Activated CD8-positive, alpha-beta T cell treated with anti-CD3 and anti-CD28 coated beads, Interleukin-2, amount 10 ng/mL, durations not matched to agents 7 days and 5 days (primary cell): ENCODE measurements at regions of chr2 and their contacts with region 1.

Region 1: GRCh38 chr2:181140414-181140813 is 160.0 kb downstream of the UBE2E3 start:
- DNase-seq: no peak
- ATAC-seq: no peak
- H3K4me3 Mint-ChIP-seq: peak overlapping the region; percentile 65
- H3K27ac Mint-ChIP-seq: peak overlapping the region; percentile 92
- H3K4me1 Mint-ChIP-seq: peaks cover 72% of the 10 kb centered on the region
- H3K27me3 Mint-ChIP-seq: no peaks in the 10 kb centered on the region

Region 2: GRCh38 chr2:181123798-181124231 is 16.6 kb before region 1 on chr2:
- CTCF ChIA-PET with region 1: interaction called, 28 read pairs
- POLR2A ChIA-PET with region 1: interaction called, 40 read pairs
- DNase-seq: peak; percentile 85
- ATAC-seq: peak; percentile 94
- H3K4me3 Mint-ChIP-seq: peak overlapping the region; percentile 77
- H3K27ac Mint-ChIP-seq: peak overlapping the region; percentile 86
- H3K4me1 Mint-ChIP-seq: peaks cover 70% of the 10 kb centered on the region
- H3K27me3 Mint-ChIP-seq: no peaks in the 10 kb centered on the region

Region 3: DNA sequence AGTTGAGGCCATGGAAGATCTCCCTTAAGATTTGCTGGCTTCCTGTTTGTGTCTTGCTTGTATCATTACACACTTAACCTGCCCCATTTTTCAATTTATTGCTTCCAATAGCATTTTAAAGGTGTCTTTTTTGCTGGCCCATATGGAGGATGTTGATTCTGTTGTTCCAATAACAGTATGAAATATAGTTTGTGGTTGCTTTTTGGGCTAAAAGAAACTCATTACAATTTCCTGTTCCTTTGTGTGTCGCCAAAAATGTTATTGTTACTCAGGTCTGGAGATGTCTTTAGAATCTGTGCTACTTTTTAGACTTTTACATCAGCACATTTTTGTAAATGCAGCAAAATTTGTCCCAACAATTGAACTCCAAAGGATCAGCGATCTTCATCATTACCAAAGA is 82.8 kb after region 1 on chr2:
- CTCF ChIA-PET with region 1: no interaction called
- POLR2A ChIA-PET with region 1: no interaction called
- DNase-seq: no peak
- ATAC-seq: peak; percentile 44
- H3K4me3 Mint-ChIP-seq: peak overlapping the region; percentile 48
- H3K27ac Mint-ChIP-seq: peak overlapping the region; percentile 89
- H3K4me1 Mint-ChIP-seq: peaks cover 28% of the 10 kb centered on the region
- H3K27me3 Mint-ChIP-seq: no peaks in the 10 kb centered on the region